ENCODE measurements at regions of chr16 and their contacts with region 1.

Region 1: GRCh38 chr16:17364319-17365210 is 106.2 kb downstream of the XYLT1 start:
- DNase-seq: no peak
- H3K4me3 ChIP-seq: no peak overlapping the region
- H3K27ac ChIP-seq: peak overlapping the region; percentile 37 to 52 (median 51)
- H3K4me1 ChIP-seq: peaks cover 8 to 78% (median 11%) of the 10 kb centered on the region in 4 donors
- H3K27me3 ChIP-seq: no peaks in the 10 kb centered on the region
- CTCF ChIP-seq: no peak
- EP300 ChIP-seq: no peak
- POLR2A ChIP-seq: no peak

Region 2: DNA sequence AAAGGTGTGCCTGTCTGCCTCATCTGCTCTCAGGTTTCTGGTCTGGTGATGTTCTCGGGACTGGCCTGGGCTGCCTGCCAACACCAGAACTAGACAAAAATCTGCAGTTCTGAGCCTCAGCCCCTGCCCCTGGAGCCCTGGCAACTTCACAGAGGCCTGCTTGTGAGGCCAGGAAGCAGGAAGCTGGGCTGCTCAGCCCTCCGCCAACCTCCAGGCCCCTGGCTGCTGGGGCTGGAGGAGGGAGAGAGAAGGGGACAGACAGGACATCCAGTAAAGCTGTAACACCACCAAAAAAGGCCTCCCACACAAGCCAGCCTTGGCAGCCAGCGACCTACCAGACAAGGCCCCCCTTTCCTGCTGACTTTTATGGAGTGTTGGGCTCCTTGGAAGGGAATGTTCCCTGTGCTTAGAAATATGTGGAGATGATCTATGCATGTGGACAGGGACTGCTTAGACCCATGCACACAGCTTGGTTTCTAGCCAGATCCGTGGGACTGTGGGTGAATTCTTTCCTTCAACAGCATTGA is 51.4 kb before region 1 on chr16:
- in situ Hi-C with region 1: no loop called
- intact Hi-C with region 1: loop called (anchors 5 kb)
- DNase-seq: peak; percentile 46
- H3K4me3 ChIP-seq: no peak overlapping the region
- H3K27ac ChIP-seq: peak overlapping the region; percentile 78 to 88 (median 84)
- H3K4me1 ChIP-seq: peaks cover 23 to 48% (median 34%) of the 10 kb centered on the region in 4 donors
- H3K27me3 ChIP-seq: no peaks in the 10 kb centered on the region
- CTCF ChIP-seq: no peak
- EP300 ChIP-seq: peak; percentile 99
- POLR2A ChIP-seq: no peak

Region 3: DNA sequence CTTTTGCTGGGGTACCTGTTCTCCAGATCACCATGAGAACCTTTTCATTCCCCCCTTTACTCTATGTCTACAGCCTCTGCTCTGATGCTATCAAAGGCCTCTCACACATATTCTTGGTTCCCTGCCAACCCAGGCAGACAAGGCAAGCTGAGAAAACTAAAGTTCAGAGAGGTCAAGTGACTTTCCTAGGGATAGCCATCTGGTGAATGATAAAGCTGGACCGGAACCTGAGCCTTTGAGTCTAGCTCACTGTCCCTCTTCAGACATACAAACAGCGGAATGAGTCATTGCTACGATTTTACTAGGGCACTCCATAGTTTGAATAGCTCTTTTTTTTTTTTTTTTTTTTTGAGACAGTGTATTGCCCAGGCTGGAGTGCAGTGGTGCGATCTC is 32.9 kb after region 1 on chr16:
- in situ Hi-C with region 1: no loop called
- intact Hi-C with region 1: loop called (anchors 5 kb)
- DNase-seq: peak; percentile 57
- H3K4me3 ChIP-seq: no peak overlapping the region
- H3K27ac ChIP-seq: peak overlapping the region; percentile 80 to 87 (median 86)
- H3K4me1 ChIP-seq: peaks cover 17 to 35% (median 29%) of the 10 kb centered on the region in 4 donors
- H3K27me3 ChIP-seq: no peaks in the 10 kb centered on the region
- CTCF ChIP-seq: no peak
- EP300 ChIP-seq: no peak
- POLR2A ChIP-seq: no peak

Measured in transverse colon (tissue), 4 donors.